Activated naive CD4-positive, alpha-beta T cell treated with anti-CD3 and anti-CD28 coated beads for 36 hours (primary cell): ENCODE measurements at regions of chr18 and their contacts with region 1.

Region 1: DNA sequence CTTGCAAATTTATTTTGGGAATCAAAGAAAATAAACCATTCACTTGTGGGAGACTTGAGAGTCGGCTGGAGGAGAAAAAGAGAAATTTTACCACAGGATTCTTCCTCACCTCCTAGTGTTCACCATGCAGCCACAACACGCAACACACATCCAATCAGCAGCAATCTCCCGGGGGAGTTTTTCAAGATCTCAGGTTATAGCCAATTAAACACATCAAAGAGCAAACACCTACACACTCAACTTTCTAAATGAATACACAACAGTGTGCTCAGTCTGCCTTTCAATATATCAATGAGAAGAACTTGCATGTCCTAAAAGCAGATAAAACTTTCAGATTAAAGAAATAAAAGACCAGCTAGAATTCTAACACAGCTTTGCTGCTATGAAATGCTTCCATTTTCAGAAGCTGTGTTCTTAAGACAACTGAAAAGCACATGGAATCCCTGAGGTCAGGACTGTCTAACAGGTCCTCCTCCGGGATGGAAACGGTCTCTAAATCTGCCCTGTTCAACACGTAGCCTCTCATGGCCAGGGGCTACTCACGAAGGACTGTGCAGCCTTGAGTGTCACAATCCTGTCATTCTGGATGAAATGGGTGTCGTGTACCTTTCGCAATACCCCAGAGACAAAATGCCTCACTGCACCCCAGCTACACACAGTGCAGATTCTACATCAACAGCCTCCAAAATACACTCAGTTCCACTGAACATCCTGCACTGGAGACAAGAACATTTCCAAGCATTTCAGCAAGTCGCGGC is 84.2 kb downstream of the ZNF516 start:
- DNase-seq: peak; percentile 55
- H3K4me3 Mint-ChIP-seq: no peak overlapping the region
- H3K27ac Mint-ChIP-seq: no peak overlapping the region
- H3K4me1 Mint-ChIP-seq: peaks cover 21% of the 10 kb centered on the region
- H3K27me3 Mint-ChIP-seq: no peaks in the 10 kb centered on the region

Region 2: GRCh38 chr18:75322206-75322605 is 1088.6 kb before region 1 on chr18:
- CTCF ChIA-PET with region 1: no interaction called
- intact Hi-C with region 1: no loop called
- DNase-seq: no peak
- H3K4me3 Mint-ChIP-seq: no peak overlapping the region
- H3K27ac Mint-ChIP-seq: no peak overlapping the region
- H3K4me1 Mint-ChIP-seq: no peaks in the 10 kb centered on the region
- H3K27me3 Mint-ChIP-seq: peaks cover 2% of the 10 kb centered on the region

Region 3: DNA sequence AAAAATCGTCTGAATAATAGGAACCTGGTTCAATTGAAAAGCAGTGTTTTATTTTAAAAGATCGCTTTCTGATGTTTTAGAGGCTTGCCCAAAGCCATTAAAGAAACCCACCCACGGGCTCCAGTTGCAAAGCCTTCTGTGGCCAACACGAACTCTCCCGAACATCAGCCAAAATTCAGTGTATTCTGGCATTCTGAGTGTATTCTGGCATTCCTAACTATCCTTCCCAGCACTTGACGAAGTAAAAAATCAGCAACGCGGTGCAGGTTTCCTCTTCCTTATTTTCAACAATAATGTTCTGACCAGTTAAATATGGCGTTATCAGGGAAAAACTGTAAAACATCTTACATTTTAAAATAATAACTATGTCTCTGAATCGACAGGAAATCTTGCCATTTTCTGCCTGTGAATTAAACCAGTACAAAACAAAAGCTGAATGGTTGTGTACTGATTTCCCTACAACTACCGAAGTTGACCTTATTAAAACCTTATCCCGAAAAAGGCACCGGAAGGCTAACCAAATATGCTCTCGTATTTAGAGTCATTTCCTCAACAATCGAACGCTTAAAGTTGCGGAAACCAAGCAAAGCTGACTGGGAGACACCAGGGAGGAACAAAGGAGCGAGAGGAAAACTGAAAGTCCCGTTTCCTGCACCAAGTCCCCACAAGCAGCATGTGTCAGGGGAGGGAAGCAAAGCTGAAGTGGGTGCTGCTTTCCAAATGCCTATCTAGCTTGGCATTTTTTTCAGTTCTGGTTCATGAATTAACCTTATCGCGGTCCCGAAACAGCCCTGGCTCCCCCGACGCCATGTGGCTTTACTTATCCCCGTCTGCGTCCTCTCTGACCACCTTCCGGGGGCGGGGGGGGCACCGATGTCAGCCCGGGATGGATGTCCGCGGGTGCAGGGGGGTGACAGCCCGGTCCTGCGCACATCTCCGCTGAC is 39.9 kb after region 1 on chr18:
- CTCF ChIA-PET with region 1: no interaction called
- intact Hi-C with region 1: loop called (anchors 2 kb)
- DNase-seq: peak; percentile 54
- H3K4me3 Mint-ChIP-seq: peak overlapping the region; percentile 76
- H3K27ac Mint-ChIP-seq: peak overlapping the region; percentile 74
- H3K4me1 Mint-ChIP-seq: peaks cover 39% of the 10 kb centered on the region
- H3K27me3 Mint-ChIP-seq: peaks cover 3% of the 10 kb centered on the region